Mucosa of descending colon (tissue), 3 donors: ENCODE measurements at regions of chr22 and their contacts with region 1.

Region 1: GRCh38 chr22:41543854-41544670 is at the start of gene POLR3H:
- DNase-seq: peak; percentile 98 to 100 (median 99)
- ATAC-seq: peak; percentile 99
- H3K4me3 ChIP-seq: peak within 1 kb of the TSS; percentile 60
- H3K4me1 ChIP-seq: peaks cover 21% of the 10 kb centered on the region
- CTCF ChIP-seq: peak; percentile 58
- total RNA-seq, gene POLR3H: 12.4 to 26.1 (median 15.7) TPM

Region 2: DNA sequence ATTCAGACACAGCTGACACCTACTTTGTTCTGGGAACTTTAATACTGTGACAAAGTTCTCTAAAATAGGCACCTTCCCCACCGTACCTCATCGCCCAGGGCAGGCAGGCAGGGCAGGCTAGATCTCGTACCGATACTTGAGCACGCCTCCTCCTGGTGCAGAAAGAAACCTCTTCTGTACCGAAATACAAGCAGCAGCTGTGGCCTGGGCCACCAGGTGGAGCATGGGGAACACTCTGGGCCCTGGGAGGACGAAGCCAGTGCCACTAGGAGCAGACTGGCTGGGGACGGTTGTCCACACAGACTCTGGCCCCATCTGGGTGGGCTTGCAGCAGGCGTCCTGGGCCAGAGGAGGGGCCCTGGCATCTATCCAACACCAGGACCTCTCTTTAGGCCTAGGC is 32.8 kb after region 1 on chr22:
- intact Hi-C with region 1: no loop called
- DNase-seq: peak in 2 of 3 donors; percentile 52 to 60
- ATAC-seq: peak; percentile 69
- H3K4me3 ChIP-seq: no peak overlapping the region
- H3K4me1 ChIP-seq: no peaks in the 10 kb centered on the region
- CTCF ChIP-seq: no peak

Region 3: GRCh38 chr22:41589391-41590241 is 45.6 kb after region 1 on chr22 and contains the start of gene PMM1:
- intact Hi-C with region 1: loop called in 1 of 2 experiments (anchors 10 kb)
- DNase-seq: peak; percentile 100
- ATAC-seq: peak; percentile 94
- H3K4me3 ChIP-seq: peak within 1 kb of the TSS; percentile 83
- H3K4me1 ChIP-seq: peaks cover 19% of the 10 kb centered on the region
- CTCF ChIP-seq: no peak
- total RNA-seq, gene PMM1: 40.7 to 69.4 (median 51.7) TPM